ENCODE measurements at regions of chr9 and their contacts with region 1.

Region 1: GRCh38 chr9:13427587-13427986 is 148.1 kb upstream of the MPDZ start:
- DNase-seq: peak; percentile 19
- H3K4me3 ChIP-seq: no peak overlapping the region
- H3K27ac ChIP-seq: no peak overlapping the region
- H3K4me1 ChIP-seq: no peaks in the 10 kb centered on the region
- H3K27me3 ChIP-seq: no peaks in the 10 kb centered on the region
- CTCF ChIP-seq: peak; percentile 68

Region 2: DNA sequence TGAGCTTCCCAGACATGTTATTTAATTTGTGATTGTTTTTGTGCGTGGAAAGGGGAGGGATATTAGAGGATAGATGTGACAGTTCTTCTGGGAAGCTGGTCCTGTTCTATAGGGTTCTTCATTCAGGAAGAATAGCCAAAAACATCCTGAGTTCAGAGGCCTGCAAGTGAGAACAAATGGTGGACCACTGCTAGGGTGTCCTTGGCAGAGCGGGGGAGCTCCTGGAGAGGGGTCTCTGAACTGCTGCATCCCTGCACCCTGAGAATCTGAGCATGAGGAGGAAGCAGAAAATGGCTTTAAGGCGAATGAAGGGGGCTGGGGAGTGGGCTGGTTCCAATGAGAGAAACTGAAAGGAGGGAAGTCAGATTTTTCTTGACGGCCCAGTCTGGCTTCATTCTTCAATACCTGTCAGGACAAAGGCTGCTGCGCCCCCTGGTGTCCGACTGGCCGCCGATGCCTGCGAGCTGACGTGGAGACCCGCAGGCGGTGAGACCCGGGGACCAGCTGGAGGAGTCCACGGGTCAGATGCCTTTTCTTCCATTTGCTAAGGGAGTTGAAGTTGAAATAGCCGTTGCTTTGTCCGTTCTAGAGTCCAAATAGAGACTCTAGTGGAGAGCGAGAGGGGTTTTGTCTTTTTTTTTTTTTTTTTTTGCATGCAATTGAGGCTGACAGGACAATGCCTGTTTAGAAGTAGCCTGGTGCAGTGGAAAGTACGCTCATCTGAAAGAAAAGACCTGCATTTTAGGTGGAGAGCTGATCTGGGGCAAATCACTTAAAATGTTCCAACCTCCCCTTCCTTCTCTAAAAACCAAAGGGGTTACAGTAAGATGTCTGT is 925.9 kb after region 1 on chr9:
- intact Hi-C with region 1: loop called (anchors 2 kb)
- DNase-seq: peak; percentile 95
- H3K4me3 ChIP-seq: no peak overlapping the region
- H3K27ac ChIP-seq: no peak overlapping the region
- H3K4me1 ChIP-seq: peaks cover 5% of the 10 kb centered on the region
- H3K27me3 ChIP-seq: peaks cover 23% of the 10 kb centered on the region
- CTCF ChIP-seq: peak; percentile 86

Region 3: GRCh38 chr9:14428781-14429230 is 1001.2 kb after region 1 on chr9:
- intact Hi-C with region 1: loop called (anchors 5 kb)
- DNase-seq: peak; percentile 64
- H3K4me3 ChIP-seq: no peak overlapping the region
- H3K27ac ChIP-seq: no peak overlapping the region
- H3K4me1 ChIP-seq: no peaks in the 10 kb centered on the region
- H3K27me3 ChIP-seq: no peaks in the 10 kb centered on the region
- CTCF ChIP-seq: peak; percentile 77